PC-3 (cell line): ENCODE measurements at regions of chr6 and their contacts with region 1.

Region 1: DNA sequence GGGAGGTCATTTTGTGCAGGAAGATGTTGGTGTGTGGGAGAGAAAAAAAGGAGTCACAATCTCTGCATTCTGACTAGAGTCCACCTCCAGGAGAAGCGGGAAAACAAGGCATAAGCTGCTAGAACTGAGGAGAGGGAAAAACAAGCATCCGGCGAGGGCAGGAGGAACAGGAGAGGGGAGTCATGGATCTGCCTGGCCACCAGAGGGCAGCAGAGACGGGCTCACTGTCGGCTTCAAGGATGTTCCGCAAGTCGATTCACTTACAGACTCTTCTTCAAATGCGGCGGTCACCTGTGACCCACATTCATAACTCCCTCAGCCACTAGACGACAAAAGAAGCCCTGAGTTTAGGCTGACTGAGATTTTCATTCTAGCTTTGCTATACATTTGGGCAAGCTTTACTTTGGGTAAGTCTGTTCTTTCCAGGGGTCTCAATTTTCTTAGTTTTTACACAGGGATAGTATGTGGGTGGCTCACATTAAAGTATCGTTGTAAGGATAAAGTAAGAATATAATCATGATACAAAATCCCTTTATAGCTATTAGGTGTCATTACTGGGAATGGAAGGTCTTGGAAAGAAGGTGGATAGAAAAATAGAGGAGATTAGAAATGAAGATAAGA is 6.6 kb upstream of the BTNL2 start:
- DNase-seq: peak; percentile 83
- ATAC-seq: peak; percentile 79
- H3K4me3 ChIP-seq: peak overlapping the region; percentile 43; the same call in 1 of the 2 replicates
- H3K27ac ChIP-seq: no peak overlapping the region
- H3K4me1 ChIP-seq: peaks cover 4% of the 10 kb centered on the region; the same call in 1 of the 2 replicates
- H3K27me3 ChIP-seq: peaks cover 9% of the 10 kb centered on the region
- CTCF ChIP-seq: peak; percentile 92

Region 2: DNA sequence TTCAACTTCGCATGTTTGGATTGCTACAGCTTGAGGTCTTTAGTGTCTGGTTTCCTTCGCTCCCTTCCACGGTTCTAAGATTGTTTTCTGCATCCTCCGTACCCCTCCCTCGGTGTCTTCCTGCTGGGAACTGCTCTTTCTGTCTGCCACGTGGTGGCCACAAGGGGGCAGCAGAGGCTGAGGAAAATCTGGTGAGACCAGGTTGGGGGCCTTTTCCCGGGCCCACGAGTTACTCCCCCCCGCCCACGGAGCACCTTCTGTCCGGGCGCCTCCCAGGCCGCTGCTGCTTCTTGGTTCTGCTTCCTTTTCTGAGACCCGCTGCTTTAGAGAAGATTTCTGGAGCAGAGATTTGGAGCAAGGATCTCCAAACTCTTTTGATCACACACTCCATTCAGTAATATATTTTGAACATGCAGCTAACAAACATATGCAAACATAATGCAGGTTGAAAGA is 168.6 kb before region 1 on chr6:
- CTCF ChIA-PET with region 1: no interaction called
- POLR2A ChIA-PET with region 1: no interaction called
- intact Hi-C with region 1: loop called (anchors 1 kb)
- DNase-seq: peak; percentile 83
- ATAC-seq: peak; percentile 92
- H3K4me3 ChIP-seq: peak overlapping the region; percentile 17; the same call in 1 of the 2 replicates
- H3K27ac ChIP-seq: no peak overlapping the region
- H3K4me1 ChIP-seq: 0 out of 2 replicates have a peak, but pooled peaks cover 5% of the 10 kb centered on the region
- H3K27me3 ChIP-seq: no peaks in the 10 kb centered on the region
- CTCF ChIP-seq: peak; percentile 94

Region 3: DNA sequence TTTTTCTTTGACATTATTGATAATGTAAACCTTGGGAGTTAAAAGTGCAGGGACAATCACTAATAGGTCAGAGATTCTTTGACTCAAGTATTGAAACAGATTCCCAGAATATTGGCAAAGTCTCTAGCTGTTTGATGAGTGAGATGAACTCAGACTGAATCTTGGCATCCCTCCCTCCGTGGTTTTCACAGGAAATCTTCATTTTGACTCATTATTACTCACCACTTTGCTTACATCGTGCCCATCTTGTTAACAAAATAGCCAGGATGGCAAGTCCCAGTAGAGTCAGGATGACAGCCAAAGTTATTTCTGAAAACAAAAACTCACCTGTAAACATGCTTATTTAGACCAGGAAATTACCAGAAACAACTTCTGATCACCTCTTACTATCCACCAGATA is 43.9 kb before region 1 on chr6:
- CTCF ChIA-PET with region 1: no interaction called
- POLR2A ChIA-PET with region 1: no interaction called
- intact Hi-C with region 1: loop called (anchors 5 kb)
- DNase-seq: peak; percentile 97
- ATAC-seq: peak; percentile 84
- H3K4me3 ChIP-seq: no peak overlapping the region
- H3K27ac ChIP-seq: peak overlapping the region; percentile 93
- H3K4me1 ChIP-seq: peaks cover 36% of the 10 kb centered on the region
- H3K27me3 ChIP-seq: no peaks in the 10 kb centered on the region
- CTCF ChIP-seq: no peak

Region 4: DNA sequence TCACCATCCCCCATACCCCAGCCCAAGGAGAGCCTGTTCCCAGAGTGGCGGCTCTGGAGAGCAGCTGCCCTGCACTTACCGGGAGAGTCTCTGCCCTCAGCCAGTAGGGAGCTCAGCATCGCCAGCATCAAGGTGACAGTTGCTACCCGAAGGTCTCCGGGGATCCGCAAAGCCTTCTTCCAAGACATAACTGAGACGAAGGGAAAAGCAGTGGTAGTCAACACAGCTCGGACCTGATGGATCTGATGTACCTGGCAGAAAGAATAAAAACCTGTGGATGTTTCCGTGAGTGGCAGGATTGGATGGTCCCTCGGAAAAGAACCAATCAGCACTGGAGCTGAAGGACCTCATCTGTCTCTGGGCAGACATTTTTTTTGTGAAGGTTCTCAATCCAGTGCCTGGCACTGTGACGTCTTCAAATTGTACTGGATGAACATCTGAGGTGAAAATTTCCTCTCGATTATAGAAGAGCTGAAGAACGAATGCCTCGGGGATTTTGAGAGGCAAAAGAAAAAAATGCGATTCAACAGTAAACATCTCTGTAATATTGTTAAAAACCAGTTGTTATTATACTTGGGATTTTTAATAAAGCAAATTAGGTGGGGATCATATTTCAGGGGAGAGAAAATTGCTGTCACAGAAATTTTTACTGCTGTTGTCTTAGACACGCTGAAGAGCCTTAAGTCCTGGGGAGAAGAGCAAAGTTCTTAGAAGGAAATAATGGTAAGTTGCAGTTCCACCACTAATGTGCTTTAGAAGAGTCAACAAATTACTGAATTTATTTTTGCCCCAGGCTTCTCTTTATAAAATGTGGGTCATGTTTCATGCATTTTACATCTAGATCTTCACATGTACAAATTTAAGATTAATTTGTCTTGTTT is 253.1 kb after region 1 on chr6 and contains the start of gene HLA-DQB1:
- CTCF ChIA-PET with region 1: no interaction called
- POLR2A ChIA-PET with region 1: no interaction called
- intact Hi-C with region 1: no loop called
- DNase-seq: peak; percentile 59
- ATAC-seq: peak; percentile 80
- H3K4me3 ChIP-seq: no peak within 1 kb of the TSS
- H3K27ac ChIP-seq: no peak within 1 kb of the TSS
- H3K4me1 ChIP-seq: no peaks in the 10 kb centered on the region
- H3K27me3 ChIP-seq: peaks cover 44% of the 10 kb centered on the region
- CTCF ChIP-seq: no peak
- total RNA-seq, gene HLA-DQB1: not detected in 2 replicates